Heart left ventricle (tissue), 16 donors: ENCODE measurements at regions of chr9 and their contacts with region 1.

Region 1: GRCh38 chr9:91489361-91489899 is 65.8 kb upstream of the NFIL3 start:
- DNase-seq: peak in 1 of 5 donors; percentile 45
- ATAC-seq: peak; percentile 29 to 84 (median 72)
- H3K4me3 ChIP-seq: no peak overlapping the region
- H3K27ac ChIP-seq: peak overlapping the region in 11 of 12 donors; percentile 44 to 87 (median 65)
- H3K4me1 ChIP-seq: peaks cover 0 to 29% (median 7%) of the 10 kb centered on the region in 12 donors
- H3K27me3 ChIP-seq: no peaks in the 10 kb centered on the region
- CTCF ChIP-seq: no peak
- POLR2A ChIP-seq: no peak

Region 2: GRCh38 chr9:91572044-91572443 is 82.6 kb after region 1 on chr9:
- intact Hi-C with region 1: loop called in 2 of 10 experiments (anchors 10 kb)
- DNase-seq: no peak
- ATAC-seq: peak; percentile 57 to 77 (median 65)
- H3K4me3 ChIP-seq: no peak overlapping the region
- H3K27ac ChIP-seq: peak overlapping the region in 4 of 12 donors; percentile 12 to 67 (median 22)
- H3K4me1 ChIP-seq: peaks cover 0 to 5% (median 0%) of the 10 kb centered on the region in 12 donors
- H3K27me3 ChIP-seq: no peaks in the 10 kb centered on the region
- CTCF ChIP-seq: no peak
- POLR2A ChIP-seq: no peak

Region 3: GRCh38 chr9:91681461-91682305 is 192.3 kb after region 1 on chr9:
- intact Hi-C with region 1: loop called in 1 of 10 experiments (anchors 10 kb)
- DNase-seq: peak; percentile 67 to 89 (median 79)
- ATAC-seq: peak; percentile 82 to 99 (median 96)
- H3K4me3 ChIP-seq: peak overlapping the region in 4 of 12 donors; percentile 15 to 33 (median 32)
- H3K27ac ChIP-seq: no peak overlapping the region
- H3K4me1 ChIP-seq: peaks cover 0 to 7% (median 0%) of the 10 kb centered on the region in 12 donors
- H3K27me3 ChIP-seq: peaks cover 0 to 7% (median 0%) of the 10 kb centered on the region in 9 donors
- CTCF ChIP-seq: peak; percentile 80 to 94 (median 86)
- POLR2A ChIP-seq: no peak